GM12878 (cell line): ENCODE measurements at regions of chr2 and their contacts with region 1.

Region 1: GRCh38 chr2:203997980-203998809 is 61.6 kb downstream of the ICOS start:
- DNase-seq: no peak
- ATAC-seq: peak; percentile 41
- H3K4me3 ChIP-seq: no peak overlapping the region; the same call in 1 of the 2 replicates
- H3K27ac ChIP-seq: no peak overlapping the region
- H3K4me1 ChIP-seq: no peaks in the 10 kb centered on the region
- H3K27me3 ChIP-seq: peaks cover 0 to 3% of the 10 kb centered on the region in 2 experiments; a peak in 1 of 4 replicates
- CTCF ChIP-seq: no peak
- EP300 ChIP-seq: no peak
- POLR2A ChIP-seq: no peak
- RAD21 ChIP-seq: no peak

Region 2: GRCh38 chr2:203871371-203871983 is 126.7 kb before region 1 on chr2:
- CTCF ChIA-PET with region 1: no interaction called
- POLR2A ChIA-PET with region 1: no interaction called
- RAD21 ChIA-PET with region 1: no interaction called
- SMC1A ChIA-PET with region 1: no interaction called
- in situ Hi-C with region 1: no loop called
- intact Hi-C with region 1: loop called (anchors 5 kb)
- DNase-seq: peak; percentile 81
- ATAC-seq: peak; percentile 98
- H3K4me3 ChIP-seq: no peak overlapping the region
- H3K27ac ChIP-seq: no peak overlapping the region
- H3K4me1 ChIP-seq: peaks cover 13% of the 10 kb centered on the region
- H3K27me3 ChIP-seq: peaks cover 0 to 20% of the 10 kb centered on the region in 2 experiments; a peak in 2 of 4 replicates
- CTCF ChIP-seq: no peak
- EP300 ChIP-seq: peak; percentile 78 to 91
- POLR2A ChIP-seq: no peak
- RAD21 ChIP-seq: no peak

Region 3: GRCh38 chr2:203951366-203951902 is 46.8 kb before region 1 on chr2:
- CTCF ChIA-PET with region 1: interaction called, 3 read pairs
- POLR2A ChIA-PET with region 1: no interaction called
- RAD21 ChIA-PET with region 1: no interaction called
- SMC1A ChIA-PET with region 1: interaction called, 3 read pairs
- in situ Hi-C with region 1: no loop called
- intact Hi-C with region 1: loop called (anchors 5 kb)
- DNase-seq: peak; percentile 23
- ATAC-seq: peak; percentile 62
- H3K4me3 ChIP-seq: no peak overlapping the region
- H3K27ac ChIP-seq: no peak overlapping the region
- H3K4me1 ChIP-seq: peaks cover 4% of the 10 kb centered on the region
- H3K27me3 ChIP-seq: no peaks in the 10 kb centered on the region
- CTCF ChIP-seq: no peak
- EP300 ChIP-seq: 0 out of 4 replicates have a peak, but pooled peaks of 1 of the 2 experiments have one; percentile 9
- POLR2A ChIP-seq: no peak
- RAD21 ChIP-seq: no peak